Activated T-helper 1 cell treated with anti-CD3 and anti-CD28 coated beads, Interleukin-12 subunit alpha, Interleukin-12 subunit beta, Interleukin-2, Interleukin-4 antibody, amounts not matched to agents 30 ng/mL and 10 ng/mL and 1 ng/mL, durations not matched to agents 14 hours and 24 hours and 36 hours (primary cell): ENCODE measurements at regions of chr2 and their contacts with region 1.

Region 1: GRCh38 chr2:7845332-7845731 is 836.5 kb upstream of the ID2 start:
- DNase-seq: no peak
- H3K4me3 Mint-ChIP-seq: no peak overlapping the region
- H3K27ac Mint-ChIP-seq: no peak overlapping the region
- H3K4me1 Mint-ChIP-seq: peaks cover 57% of the 10 kb centered on the region
- H3K27me3 Mint-ChIP-seq: no peaks in the 10 kb centered on the region

Region 2: GRCh38 chr2:7857904-7858303 is 12.6 kb after region 1 on chr2:
- intact Hi-C with region 1: loop called (anchors 1 kb)
- DNase-seq: no peak
- H3K4me3 Mint-ChIP-seq: no peak overlapping the region
- H3K27ac Mint-ChIP-seq: peak overlapping the region; percentile 54
- H3K4me1 Mint-ChIP-seq: peaks cover 28% of the 10 kb centered on the region
- H3K27me3 Mint-ChIP-seq: peaks cover 3% of the 10 kb centered on the region

Region 3: DNA sequence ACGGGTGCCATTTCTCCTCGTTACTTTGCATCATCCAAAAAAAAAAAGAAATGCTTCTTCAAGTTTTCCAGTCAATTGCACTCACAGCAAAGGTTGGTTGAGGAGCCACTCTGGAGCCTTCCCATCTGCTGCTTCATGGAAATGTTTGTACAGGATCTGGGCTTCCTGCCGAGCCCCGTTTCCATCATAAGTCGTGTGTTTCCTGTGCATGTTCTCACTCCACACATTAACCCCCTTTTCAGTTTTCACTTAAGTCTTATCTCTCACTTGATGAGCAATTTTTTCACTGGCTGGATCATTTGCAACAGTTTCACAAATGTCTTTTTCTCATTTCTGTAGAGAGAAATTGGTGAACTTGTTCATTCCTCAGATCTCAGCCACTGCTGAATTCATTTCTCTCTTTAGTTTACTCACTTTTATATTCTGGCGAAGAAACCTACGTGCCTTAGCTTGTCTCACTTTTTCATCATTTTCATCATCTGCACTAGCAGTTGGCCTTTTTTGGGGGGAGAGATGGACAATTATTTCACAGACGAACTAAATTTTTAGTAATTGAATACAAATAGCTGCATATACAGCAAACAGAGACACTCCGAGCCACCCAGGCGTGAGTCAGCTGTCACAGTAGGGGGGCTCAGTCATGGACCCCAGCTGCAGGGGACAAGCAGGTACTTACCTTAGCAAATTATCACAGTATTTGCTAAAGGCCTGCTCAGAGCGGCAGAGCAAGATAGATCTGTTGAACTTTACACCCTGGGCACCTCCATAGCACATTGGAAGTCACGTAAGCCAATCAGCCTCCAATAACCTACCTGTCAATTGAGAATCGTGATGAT is 85.7 kb after region 1 on chr2:
- intact Hi-C with region 1: loop called (anchors 1 kb)
- DNase-seq: no peak
- H3K4me3 Mint-ChIP-seq: no peak overlapping the region
- H3K27ac Mint-ChIP-seq: peak overlapping the region; percentile 81
- H3K4me1 Mint-ChIP-seq: peaks cover 11% of the 10 kb centered on the region
- H3K27me3 Mint-ChIP-seq: no peaks in the 10 kb centered on the region

Region 4: DNA sequence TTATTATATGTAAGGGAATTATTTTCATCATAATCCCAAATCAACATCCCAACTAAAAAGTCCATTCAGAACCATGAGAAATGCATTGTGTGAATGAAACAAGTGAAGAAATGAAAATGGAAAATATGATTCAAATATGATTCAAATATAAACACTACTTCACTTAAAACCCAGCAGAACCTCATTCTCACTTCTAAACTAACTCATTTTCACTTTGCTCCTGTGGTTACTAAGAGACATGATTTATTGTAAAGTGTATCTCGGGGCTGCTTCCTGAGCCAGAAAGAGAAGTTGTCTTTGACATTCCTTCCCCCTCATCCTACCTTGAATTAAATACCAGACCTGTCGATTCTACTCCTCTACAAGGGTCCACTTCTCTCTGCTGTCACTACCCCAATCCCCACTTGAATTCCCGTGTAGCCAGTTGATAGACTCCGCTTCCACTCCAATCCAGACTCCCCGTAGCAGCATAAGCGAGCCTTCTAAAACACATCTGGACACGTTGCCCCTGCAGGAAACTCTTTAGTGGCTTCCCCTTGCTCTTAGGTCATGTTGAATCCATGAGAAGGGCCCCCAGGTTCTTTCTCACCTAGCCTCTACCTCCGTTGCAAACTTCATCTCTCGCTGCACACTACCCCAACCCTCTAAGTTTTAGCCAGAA is 139.5 kb after region 1 on chr2:
- intact Hi-C with region 1: loop called (anchors 2 kb)
- DNase-seq: no peak
- H3K4me3 Mint-ChIP-seq: peak overlapping the region; percentile 12
- H3K27ac Mint-ChIP-seq: peak overlapping the region; percentile 82
- H3K4me1 Mint-ChIP-seq: peaks cover 28% of the 10 kb centered on the region
- H3K27me3 Mint-ChIP-seq: no peaks in the 10 kb centered on the region